Spleen (tissue), 13 donors: ENCODE measurements at regions of chr6 and their contacts with region 1.

Region 1: GRCh38 chr6:36962874-36963273 is 8.3 kb downstream of the PI16 start:
- DNase-seq: peak; percentile 90
- H3K4me3 ChIP-seq: peak overlapping the region in 1 of 8 donors; percentile 3
- H3K27ac ChIP-seq: peak overlapping the region in 4 of 8 donors; percentile 2 to 58 (median 30)
- H3K4me1 ChIP-seq: peaks cover 0 to 34% (median 25%) of the 10 kb centered on the region in 6 donors
- H3K27me3 ChIP-seq: peaks cover 0 to 11% (median 0%) of the 10 kb centered on the region in 7 donors
- CTCF ChIP-seq: no peak
- POLR2A ChIP-seq: no peak

Region 2: GRCh38 chr6:36839749-36840431 is 123.0 kb before region 1 on chr6:
- intact Hi-C with region 1: no loop called
- DNase-seq: peak; percentile 76
- H3K4me3 ChIP-seq: peak overlapping the region; percentile 24 to 76 (median 46)
- H3K27ac ChIP-seq: peak overlapping the region in 2 of 8 donors; percentile 5 to 13
- H3K4me1 ChIP-seq: peaks cover 12 to 42% (median 22%) of the 10 kb centered on the region in 6 donors
- H3K27me3 ChIP-seq: peaks cover 0 to 48% (median 27%) of the 10 kb centered on the region in 7 donors
- CTCF ChIP-seq: peak in 2 of 11 experiments; percentile 17 to 19
- POLR2A ChIP-seq: no peak

Region 3: DNA sequence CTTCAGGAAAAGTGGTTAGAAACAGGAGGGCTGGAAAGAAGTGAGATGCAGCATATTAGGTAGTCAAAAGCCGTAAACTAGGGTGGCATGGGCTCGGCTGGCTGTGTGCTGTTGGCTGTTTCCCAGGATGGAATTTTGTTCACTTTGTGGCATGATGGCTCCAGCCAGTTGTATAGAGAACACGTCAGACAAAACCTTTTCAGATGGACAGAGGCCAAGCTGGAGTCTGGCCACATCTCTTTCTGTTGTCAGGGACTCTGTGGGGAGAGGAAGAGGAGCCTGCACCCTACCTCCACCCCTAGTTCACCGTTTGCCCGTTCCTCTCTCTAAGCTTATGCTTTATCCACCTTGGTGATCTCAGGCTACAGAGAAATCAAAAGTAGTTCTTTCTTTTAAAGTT is 55.1 kb before region 1 on chr6:
- intact Hi-C with region 1: loop called (anchors 10 kb)
- DNase-seq: no peak
- H3K4me3 ChIP-seq: no peak overlapping the region
- H3K27ac ChIP-seq: no peak overlapping the region
- H3K4me1 ChIP-seq: peaks cover 4 to 25% (median 14%) of the 10 kb centered on the region in 6 donors
- H3K27me3 ChIP-seq: no peaks in the 10 kb centered on the region
- CTCF ChIP-seq: no peak
- POLR2A ChIP-seq: no peak

Region 4: DNA sequence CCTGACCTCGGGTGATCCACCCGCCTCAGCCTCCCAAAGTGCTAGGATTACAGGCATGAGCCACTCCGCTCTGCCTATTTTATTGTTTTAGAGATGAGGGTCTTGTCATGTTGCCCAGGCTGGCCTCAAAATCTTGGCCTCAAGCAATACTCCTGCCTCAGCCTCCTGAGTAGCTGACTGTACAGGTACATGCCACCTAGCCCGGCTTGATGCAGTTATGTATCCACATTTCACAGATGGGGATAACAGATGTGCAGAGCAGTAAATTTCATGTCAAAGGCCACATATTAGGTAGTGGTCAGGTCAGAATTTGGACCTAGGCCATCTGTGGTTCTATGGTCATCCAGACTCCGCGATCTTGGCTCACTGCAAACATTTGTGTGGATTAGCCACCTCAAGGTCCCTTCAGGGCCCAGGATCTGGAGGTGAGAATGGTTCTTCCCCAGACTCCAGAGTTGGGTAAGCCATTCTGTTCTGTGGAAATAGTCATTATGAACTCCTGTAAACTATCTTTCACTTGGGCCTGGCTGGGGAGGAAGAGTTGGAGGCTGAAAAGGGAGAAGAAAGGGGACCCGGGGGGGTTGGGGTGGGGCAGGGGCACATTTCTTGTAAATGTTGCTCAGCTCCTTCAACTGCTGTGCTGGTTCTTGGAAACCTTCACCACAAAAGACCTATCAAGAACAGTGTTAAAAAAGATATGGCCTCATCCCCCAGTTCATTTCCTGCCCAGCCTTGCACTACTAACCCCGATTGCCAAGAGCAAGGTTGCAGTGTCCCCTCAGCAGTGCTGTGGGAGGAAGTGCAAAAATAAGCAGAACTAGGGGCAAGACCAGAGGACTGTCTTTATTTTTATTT is 220.1 kb after region 1 on chr6:
- intact Hi-C with region 1: no loop called
- DNase-seq: peak; percentile 87
- H3K4me3 ChIP-seq: peak overlapping the region in 1 of 8 donors; percentile 18
- H3K27ac ChIP-seq: peak overlapping the region; percentile 63 to 95 (median 88)
- H3K4me1 ChIP-seq: peaks cover 21 to 94% (median 59%) of the 10 kb centered on the region in 6 donors
- H3K27me3 ChIP-seq: no peaks in the 10 kb centered on the region
- CTCF ChIP-seq: no peak
- POLR2A ChIP-seq: no peak